ENCODE measurements at regions of chr16 and their contacts with region 1.

Region 1: GRCh38 chr16:84970447-84971127 is 40.7 kb downstream of the ZDHHC7 start:
- DNase-seq: peak; percentile 70
- H3K4me3 ChIP-seq: no peak overlapping the region
- H3K27ac ChIP-seq: no peak overlapping the region
- H3K4me1 ChIP-seq: no peaks in the 10 kb centered on the region
- H3K27me3 ChIP-seq: no peaks in the 10 kb centered on the region
- CTCF ChIP-seq: peak; percentile 86 to 90
- POLR2A ChIP-seq: no peak

Region 2: GRCh38 chr16:84544031-84544773 is 426.4 kb before region 1 on chr16:
- CTCF ChIA-PET with region 1: no interaction called
- POLR2A ChIA-PET with region 1: no interaction called
- dilution Hi-C with region 1: no loop called
- intact Hi-C with region 1: no loop called
- DNase-seq: no peak
- H3K4me3 ChIP-seq: no peak overlapping the region
- H3K27ac ChIP-seq: no peak overlapping the region
- H3K4me1 ChIP-seq: peaks cover 30% of the 10 kb centered on the region
- H3K27me3 ChIP-seq: no peaks in the 10 kb centered on the region
- CTCF ChIP-seq: no peak
- POLR2A ChIP-seq: no peak

Region 3: DNA sequence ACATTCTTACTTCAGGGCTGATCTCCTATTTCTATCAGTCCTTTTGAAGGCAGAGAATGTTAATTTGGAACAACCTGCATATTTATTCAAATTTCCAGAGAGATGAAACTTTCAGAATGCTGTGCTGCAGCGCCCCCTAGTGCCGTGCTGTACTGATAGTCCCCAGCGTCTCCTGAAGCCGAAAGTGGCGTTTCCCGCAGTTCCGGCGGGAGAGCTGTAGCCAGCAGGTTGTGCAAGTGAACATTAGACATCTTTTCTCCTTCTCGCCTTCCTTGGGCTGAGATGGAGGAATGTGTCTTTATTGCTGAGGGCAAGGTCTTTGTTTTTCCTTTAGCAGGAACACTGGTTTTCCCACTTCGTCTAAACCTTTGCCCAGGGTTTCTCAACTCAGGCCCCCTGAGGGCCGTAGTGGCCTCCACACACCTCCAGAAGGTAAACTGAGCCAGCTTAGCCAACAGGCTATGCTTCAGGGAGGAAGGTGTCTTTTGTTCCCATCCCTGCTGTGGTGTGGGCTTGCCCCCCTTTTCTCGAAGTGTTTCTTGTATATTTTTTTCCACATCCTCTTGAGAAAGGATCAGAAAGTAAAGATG is 244.4 kb before region 1 on chr16:
- CTCF ChIA-PET with region 1: interaction called, 10 read pairs
- POLR2A ChIA-PET with region 1: no interaction called
- dilution Hi-C with region 1: no loop called
- intact Hi-C with region 1: no loop called
- DNase-seq: peak; percentile 82
- H3K4me3 ChIP-seq: no peak overlapping the region
- H3K27ac ChIP-seq: no peak overlapping the region
- H3K4me1 ChIP-seq: peaks cover 62% of the 10 kb centered on the region
- H3K27me3 ChIP-seq: no peaks in the 10 kb centered on the region
- CTCF ChIP-seq: peak; percentile 88 to 95
- POLR2A ChIP-seq: no peak

Region 4: DNA sequence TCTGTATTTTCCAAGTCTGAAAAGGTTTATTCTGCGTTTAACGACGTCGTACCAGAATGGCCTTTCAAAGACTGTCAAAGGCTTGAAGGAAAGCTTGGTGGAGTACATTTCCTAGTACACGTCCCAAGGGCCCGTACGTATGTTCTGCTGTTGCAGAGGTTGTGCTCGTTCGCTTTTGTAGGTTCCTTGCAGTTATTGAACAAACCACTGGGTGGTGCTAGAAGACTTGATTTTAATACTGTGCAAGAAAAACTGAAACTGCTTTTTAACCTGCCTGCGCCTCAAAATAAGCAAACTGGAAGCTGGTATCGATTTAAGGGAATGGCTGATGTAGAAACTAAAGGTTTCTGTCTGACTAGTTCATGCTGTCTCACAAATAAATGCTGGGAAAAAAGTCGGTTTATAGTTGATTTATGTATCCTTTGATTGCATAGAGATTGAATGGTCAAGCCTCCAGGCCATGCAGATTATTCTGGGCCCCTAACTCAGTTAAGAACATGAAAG is 216.2 kb before region 1 on chr16:
- CTCF ChIA-PET with region 1: interaction called, 361 read pairs
- POLR2A ChIA-PET with region 1: no interaction called
- dilution Hi-C with region 1: loop called (anchors 25 kb)
- intact Hi-C with region 1: loop called (anchors 1 kb)
- DNase-seq: peak; percentile 89
- H3K4me3 ChIP-seq: no peak overlapping the region
- H3K27ac ChIP-seq: no peak overlapping the region
- H3K4me1 ChIP-seq: peaks cover 20% of the 10 kb centered on the region
- H3K27me3 ChIP-seq: no peaks in the 10 kb centered on the region
- CTCF ChIP-seq: peak; percentile 64 to 70
- POLR2A ChIP-seq: no peak

Region 5: GRCh38 chr16:84819644-84820324 is 150.8 kb before region 1 on chr16 and contains the start of gene CRISPLD2:
- CTCF ChIA-PET with region 1: interaction called, 11 read pairs
- POLR2A ChIA-PET with region 1: no interaction called
- dilution Hi-C with region 1: no loop called
- intact Hi-C with region 1: no loop called
- DNase-seq: peak; percentile 86
- H3K4me3 ChIP-seq: peak within 1 kb of the TSS in 2 of 3 experiments; percentile 24 to 37
- H3K27ac ChIP-seq: no peak within 1 kb of the TSS
- H3K4me1 ChIP-seq: peaks cover 4% of the 10 kb centered on the region
- H3K27me3 ChIP-seq: peaks cover 6 to 11% of the 10 kb centered on the region in 2 experiments
- CTCF ChIP-seq: no peak
- POLR2A ChIP-seq: no peak
- total RNA-seq, gene CRISPLD2: 0.73 TPM in 1 of 2 replicates, not detected in the other

Region 6: GRCh38 chr16:84898447-84898846 is 72.1 kb before region 1 on chr16:
- CTCF ChIA-PET with region 1: no interaction called
- POLR2A ChIA-PET with region 1: no interaction called
- dilution Hi-C with region 1: no loop called
- intact Hi-C with region 1: no loop called
- DNase-seq: peak; percentile 24
- H3K4me3 ChIP-seq: no peak overlapping the region
- H3K27ac ChIP-seq: no peak overlapping the region
- H3K4me1 ChIP-seq: no peaks in the 10 kb centered on the region
- H3K27me3 ChIP-seq: peaks cover 0 to 2% of the 10 kb centered on the region in 2 experiments
- CTCF ChIP-seq: no peak
- POLR2A ChIP-seq: no peak

Region 7: DNA sequence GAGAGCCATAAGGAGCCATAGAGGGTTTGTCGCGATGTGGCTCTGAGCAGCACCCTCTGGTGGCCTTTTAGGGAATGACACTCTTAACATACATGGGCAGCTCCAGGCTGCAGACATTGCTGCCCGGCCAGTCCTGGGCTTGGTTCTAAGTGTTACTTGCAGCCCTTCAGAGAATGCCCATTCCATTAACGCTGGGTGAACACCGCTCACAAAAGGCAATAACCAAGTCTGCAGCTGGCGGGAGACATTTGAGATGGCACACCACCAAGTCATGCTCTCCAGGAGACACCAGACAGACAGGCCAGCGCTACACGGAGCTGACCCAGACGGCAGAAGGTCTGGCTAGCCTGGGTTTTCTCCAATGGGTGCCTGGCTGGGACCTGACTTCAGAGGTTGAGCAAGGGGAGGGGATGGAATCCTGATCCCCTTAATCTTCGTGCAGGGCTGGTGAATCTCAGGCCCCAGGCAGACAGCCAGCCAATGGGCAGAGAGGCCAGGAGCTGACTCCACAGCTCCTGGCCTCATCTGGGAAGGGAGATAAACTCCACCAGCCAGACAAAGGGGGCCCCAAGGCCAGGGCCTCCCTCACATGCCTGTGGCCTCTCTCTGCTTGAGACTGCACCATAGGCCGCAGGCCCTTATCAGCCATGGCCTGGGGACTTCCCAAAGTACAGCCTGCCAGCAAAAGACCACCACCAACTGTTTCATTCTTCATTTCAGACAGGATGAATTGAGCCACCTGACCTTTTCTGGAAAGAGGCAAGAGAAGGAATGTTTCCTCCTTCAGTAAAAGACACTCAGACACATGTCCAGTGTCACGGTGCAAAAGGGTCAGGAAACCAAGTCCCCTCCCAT is 18.0 kb before region 1 on chr16:
- CTCF ChIA-PET with region 1: interaction called, 39 read pairs
- POLR2A ChIA-PET with region 1: interaction called, 3 read pairs
- dilution Hi-C with region 1: no loop called
- intact Hi-C with region 1: no loop called
- DNase-seq: peak; percentile 87
- H3K4me3 ChIP-seq: no peak overlapping the region
- H3K27ac ChIP-seq: no peak overlapping the region
- H3K4me1 ChIP-seq: no peaks in the 10 kb centered on the region
- H3K27me3 ChIP-seq: peaks cover 0 to 2% of the 10 kb centered on the region in 2 experiments
- CTCF ChIP-seq: peak; percentile 88 to 90
- POLR2A ChIP-seq: no peak

Region 8: DNA sequence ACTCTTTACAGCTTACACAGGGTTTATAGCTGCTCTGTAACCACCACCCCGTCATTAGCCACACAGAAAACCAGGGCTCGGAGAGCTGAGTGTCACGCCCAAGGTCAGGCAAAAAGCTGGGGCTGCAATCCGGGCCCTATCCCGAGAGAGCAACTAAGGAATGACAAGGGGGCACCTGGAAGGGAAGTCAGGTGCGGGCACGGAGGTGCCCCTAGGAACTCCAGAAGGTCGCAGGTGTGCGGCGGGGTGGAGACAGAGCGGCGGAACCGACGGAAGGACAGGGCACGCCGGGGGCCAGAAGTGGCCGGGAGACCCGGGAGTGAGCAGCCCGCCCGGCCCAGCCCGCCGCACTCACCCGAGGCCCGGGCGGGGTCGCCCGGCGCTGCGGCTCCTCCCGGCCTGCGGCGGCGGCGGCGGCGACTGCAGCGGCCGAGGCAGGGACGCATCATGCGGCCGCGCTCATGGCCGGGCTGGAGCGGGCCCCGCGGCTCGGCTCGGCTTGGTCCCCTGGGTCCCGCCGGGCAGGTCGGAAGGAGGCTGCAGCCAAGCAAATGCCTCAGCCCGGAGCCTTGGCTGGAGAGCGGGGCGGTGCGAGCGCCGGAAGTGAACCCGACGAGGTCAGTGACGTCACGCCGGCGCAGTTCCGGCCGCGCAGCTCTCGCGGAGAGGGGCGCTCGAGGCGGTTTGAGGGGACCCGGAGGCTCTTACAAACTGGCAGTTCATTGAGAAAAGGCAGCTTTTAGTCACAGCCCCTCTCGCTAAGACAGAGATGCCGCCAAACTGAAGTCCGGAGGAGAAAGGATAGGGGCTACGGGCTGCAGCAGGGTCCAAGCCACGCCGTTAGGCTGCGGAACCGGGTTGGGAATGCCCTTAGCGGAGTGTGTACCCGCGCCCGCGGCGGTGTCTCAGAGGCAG is 40.6 kb after region 1 on chr16 and contains the start of gene ZDHHC7:
- CTCF ChIA-PET with region 1: interaction called, 10 read pairs
- POLR2A ChIA-PET with region 1: no interaction called
- dilution Hi-C with region 1: no loop called
- intact Hi-C with region 1: no loop called
- DNase-seq: peak; percentile 88
- H3K4me3 ChIP-seq: peak within 1 kb of the TSS; percentile 59 to 91 (median 74)
- H3K27ac ChIP-seq: peak within 1 kb of the TSS; percentile 97
- H3K4me1 ChIP-seq: peaks cover 9% of the 10 kb centered on the region
- H3K27me3 ChIP-seq: no peaks in the 10 kb centered on the region
- CTCF ChIP-seq: no peak
- POLR2A ChIP-seq: peak; percentile 88
- total RNA-seq, gene ZDHHC7: 40.4 and 44.1 TPM in 2 replicates

Region 9: DNA sequence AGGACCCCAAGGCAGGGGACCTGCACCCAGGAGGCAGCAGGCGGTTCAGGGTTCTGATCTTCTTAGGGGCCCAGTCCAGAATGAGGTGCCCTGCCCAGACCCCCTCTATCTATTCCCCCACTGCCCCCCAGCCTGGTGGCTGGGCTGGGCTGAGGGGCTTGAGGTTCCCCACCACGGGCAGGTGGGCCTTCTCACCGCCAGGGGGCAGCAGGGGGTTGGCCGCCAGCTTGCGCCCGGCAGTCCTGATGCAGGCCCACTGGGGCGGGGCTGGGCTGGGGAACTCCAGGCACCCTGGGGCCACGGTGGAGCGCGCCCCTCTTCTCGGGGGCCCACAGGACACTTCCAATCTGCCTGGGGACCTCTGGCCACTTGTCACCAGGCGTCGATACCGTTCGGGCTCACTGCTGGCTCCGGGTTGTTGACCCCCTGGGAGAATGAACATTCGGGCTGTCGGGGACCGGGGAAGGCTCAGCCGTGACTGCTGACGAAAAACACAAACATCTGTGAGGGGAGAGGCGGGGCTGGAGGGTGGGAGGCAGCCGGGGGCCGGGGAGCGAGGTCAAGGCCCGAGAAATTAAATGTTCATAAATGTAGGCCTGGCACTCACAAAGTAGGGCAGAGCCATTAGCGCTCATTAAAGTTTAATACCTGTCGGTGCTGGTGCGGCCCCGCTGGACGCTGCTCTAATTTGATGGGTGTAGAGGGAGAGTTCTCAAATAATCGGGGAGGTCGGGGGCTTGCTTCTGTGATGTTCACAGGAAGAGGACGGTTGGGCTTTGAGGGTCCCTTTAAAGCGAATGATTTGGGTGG is 423.3 kb after region 1 on chr16:
- CTCF ChIA-PET with region 1: no interaction called
- POLR2A ChIA-PET with region 1: no interaction called
- dilution Hi-C with region 1: no loop called
- intact Hi-C with region 1: no loop called
- DNase-seq: no peak
- H3K4me3 ChIP-seq: no peak overlapping the region
- H3K27ac ChIP-seq: no peak overlapping the region
- H3K4me1 ChIP-seq: peaks cover 12% of the 10 kb centered on the region
- H3K27me3 ChIP-seq: no peaks in the 10 kb centered on the region
- CTCF ChIP-seq: peak; percentile 74 to 92
- POLR2A ChIP-seq: no peak